ENCODE measurements at regions of chr14 and their contacts with region 1.

Region 1: DNA sequence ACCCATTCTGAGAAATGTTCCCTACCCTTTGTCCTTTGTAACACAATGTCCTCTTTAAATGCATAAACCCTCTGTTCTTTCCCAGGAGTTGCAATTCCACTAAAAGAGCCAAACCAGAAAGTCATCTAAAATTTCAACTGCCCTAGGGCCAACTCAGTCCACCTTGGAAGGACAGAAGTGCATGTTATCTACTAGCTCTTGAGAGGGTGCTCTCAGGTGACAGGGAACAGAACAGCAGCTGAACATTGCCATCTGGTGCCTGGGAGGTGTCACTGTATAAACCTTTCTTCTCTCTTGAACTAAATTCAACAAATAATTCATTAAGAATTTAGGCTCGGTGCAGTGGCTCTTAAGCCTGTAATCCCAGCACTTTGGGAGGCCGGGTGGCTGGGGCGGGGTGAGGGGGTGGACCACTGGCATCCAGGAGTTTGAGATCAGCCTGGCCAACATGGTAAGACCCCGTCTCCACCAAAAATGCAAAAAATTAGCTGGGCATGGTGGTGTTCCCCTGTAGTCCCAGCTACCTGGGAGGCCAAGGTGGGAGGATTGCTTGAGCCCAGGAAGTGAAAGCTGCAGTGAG is 10.3 kb upstream of the FERMT2 start:
- DNase-seq: peak; percentile 74
- H3K4me3 ChIP-seq: no peak overlapping the region
- H3K27ac ChIP-seq: no peak overlapping the region
- H3K4me1 ChIP-seq: peaks cover 10% of the 10 kb centered on the region
- H3K27me3 ChIP-seq: peaks cover 0 to 2% of the 10 kb centered on the region in 2 experiments
- CTCF ChIP-seq: peak; percentile 66 to 67
- POLR2A ChIP-seq: no peak

Region 2: DNA sequence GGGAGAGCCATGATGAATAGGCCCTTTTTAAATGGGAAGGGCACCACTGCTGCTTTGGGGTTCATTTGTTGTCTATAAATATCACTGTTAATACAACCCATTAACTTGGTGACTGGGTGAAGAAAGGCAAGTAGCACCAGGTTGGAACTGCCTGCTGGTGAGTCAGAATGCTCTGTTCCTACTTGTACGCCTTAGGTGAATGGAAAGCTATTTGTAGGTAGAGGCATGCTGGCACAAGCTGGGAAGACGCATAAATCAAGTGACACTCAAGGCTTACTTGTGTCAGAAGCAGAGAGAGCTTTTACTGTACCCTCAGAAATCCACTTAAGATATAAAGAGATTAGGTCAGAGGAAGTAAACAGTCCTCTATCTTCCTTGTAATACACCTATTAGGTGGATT is 1578.6 kb before region 1 on chr14:
- CTCF ChIA-PET with region 1: no interaction called
- POLR2A ChIA-PET with region 1: no interaction called
- dilution Hi-C with region 1: no loop called
- intact Hi-C with region 1: no loop called
- DNase-seq: no peak
- H3K4me3 ChIP-seq: no peak overlapping the region
- H3K27ac ChIP-seq: no peak overlapping the region
- H3K4me1 ChIP-seq: peaks cover 11% of the 10 kb centered on the region
- H3K27me3 ChIP-seq: no peaks in the 10 kb centered on the region
- CTCF ChIP-seq: no peak
- POLR2A ChIP-seq: no peak

Region 3: GRCh38 chr14:52299692-52300278 is 661.4 kb before region 1 on chr14:
- CTCF ChIA-PET with region 1: interaction called, 5 read pairs
- POLR2A ChIA-PET with region 1: no interaction called
- dilution Hi-C with region 1: no loop called
- intact Hi-C with region 1: loop called (anchors 2 kb)
- DNase-seq: peak; percentile 47
- H3K4me3 ChIP-seq: no peak overlapping the region
- H3K27ac ChIP-seq: no peak overlapping the region
- H3K4me1 ChIP-seq: no peaks in the 10 kb centered on the region
- H3K27me3 ChIP-seq: peaks cover 8 to 17% of the 10 kb centered on the region in 2 experiments
- CTCF ChIP-seq: peak; percentile 33 to 35
- POLR2A ChIP-seq: no peak

Region 4: DNA sequence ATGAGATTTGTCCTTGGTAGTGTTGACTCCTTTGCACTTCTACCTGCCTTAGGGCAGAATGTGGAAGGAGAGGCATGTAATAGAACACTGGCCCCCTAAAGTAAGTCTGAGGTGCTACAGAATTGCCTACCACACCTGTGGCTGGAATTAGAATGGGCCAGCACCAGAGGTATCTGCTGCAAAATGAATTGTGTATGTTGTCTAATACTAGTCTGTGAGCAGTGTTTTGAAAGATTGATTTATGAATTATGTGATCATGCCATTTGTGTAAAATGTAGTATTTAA is 236.8 kb before region 1 on chr14:
- CTCF ChIA-PET with region 1: interaction called, 11 read pairs
- POLR2A ChIA-PET with region 1: no interaction called
- dilution Hi-C with region 1: no loop called
- intact Hi-C with region 1: no loop called
- DNase-seq: no peak
- H3K4me3 ChIP-seq: no peak overlapping the region
- H3K27ac ChIP-seq: no peak overlapping the region
- H3K4me1 ChIP-seq: no peaks in the 10 kb centered on the region
- H3K27me3 ChIP-seq: no peaks in the 10 kb centered on the region
- CTCF ChIP-seq: no peak
- POLR2A ChIP-seq: no peak

Region 5: GRCh38 chr14:52829527-52829926 is 131.6 kb before region 1 on chr14:
- CTCF ChIA-PET with region 1: interaction called, 173 read pairs
- POLR2A ChIA-PET with region 1: interaction called, 4 read pairs
- dilution Hi-C with region 1: no loop called
- intact Hi-C with region 1: no loop called
- DNase-seq: no peak
- H3K4me3 ChIP-seq: no peak overlapping the region
- H3K27ac ChIP-seq: no peak overlapping the region
- H3K4me1 ChIP-seq: peaks cover 7% of the 10 kb centered on the region
- H3K27me3 ChIP-seq: no peaks in the 10 kb centered on the region
- CTCF ChIP-seq: no peak
- POLR2A ChIP-seq: no peak

Region 6: DNA sequence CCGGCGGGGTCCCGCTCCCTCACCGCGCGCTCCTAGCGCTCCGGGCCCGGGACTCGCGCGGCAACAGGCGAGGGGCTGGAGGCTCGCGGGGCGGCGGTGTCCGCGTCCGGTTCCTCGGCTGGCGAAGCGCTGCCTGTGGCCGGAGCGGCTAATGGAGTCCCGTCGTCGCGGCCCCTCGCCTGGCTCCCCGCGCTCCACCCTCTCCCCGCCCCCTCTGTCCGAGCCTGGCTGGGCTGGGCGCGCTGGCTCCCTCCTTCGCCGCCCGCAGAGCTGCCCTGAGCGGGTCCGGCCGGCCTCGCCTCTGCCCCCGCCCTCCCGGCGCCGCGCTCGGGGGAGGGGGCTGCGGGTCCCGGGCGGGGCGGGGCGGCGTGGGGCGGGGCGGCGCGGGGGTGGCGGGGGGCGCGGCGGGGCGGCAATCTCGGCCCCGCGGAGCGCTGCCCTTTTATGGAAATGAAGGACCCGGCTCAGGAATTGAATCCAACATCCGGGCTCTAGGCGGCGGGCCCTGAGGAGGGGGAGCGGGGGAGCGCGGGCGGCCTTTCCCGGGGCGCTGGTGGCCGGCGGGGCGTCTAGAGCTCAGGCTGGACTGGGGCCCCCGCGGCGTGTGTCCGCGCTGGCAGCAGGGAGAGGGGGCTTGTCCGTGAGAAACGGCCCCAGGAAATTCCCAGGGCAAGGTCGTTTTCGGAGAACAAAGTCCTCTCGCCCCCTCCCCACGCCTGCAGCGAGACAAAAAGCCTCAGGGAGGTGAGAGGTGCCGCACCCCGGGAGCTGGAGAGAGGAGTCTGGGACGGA is 10.1 kb before region 1 on chr14 and contains the start of gene FERMT2:
- CTCF ChIA-PET with region 1: interaction called, 13 read pairs
- POLR2A ChIA-PET with region 1: no interaction called
- dilution Hi-C with region 1: no loop called
- intact Hi-C with region 1: no loop called
- DNase-seq: peak; percentile 87
- H3K4me3 ChIP-seq: peak within 1 kb of the TSS; percentile 74 to 96 (median 85)
- H3K27ac ChIP-seq: peak within 1 kb of the TSS; percentile 85
- H3K4me1 ChIP-seq: peaks cover 24% of the 10 kb centered on the region
- H3K27me3 ChIP-seq: no peaks in the 10 kb centered on the region
- CTCF ChIP-seq: no peak
- POLR2A ChIP-seq: peak; percentile 50
- total RNA-seq, gene FERMT2: 108 and 113 TPM in 2 replicates

Region 7: DNA sequence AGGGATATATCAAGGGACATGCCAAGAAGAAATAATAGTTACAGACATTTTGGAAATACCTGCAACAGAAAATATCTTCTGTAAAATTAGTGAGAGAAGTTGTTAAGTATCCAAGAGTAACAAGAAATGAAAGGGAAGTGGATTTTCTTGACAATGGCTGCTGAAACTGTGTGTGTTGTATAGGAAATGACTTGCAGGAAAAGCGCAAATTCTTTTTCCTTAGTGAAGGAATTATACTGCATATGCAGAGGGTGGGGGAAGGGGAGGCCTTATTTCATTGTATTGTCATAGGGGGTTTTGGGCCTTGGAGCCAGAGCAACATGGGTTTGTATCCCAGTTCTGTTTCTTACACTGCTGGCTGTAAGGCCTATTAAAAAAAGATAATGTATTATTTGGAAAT is 276.3 kb after region 1 on chr14:
- CTCF ChIA-PET with region 1: no interaction called
- POLR2A ChIA-PET with region 1: no interaction called
- dilution Hi-C with region 1: no loop called
- intact Hi-C with region 1: loop called (anchors 1 kb)
- DNase-seq: peak; percentile 78
- H3K4me3 ChIP-seq: no peak overlapping the region
- H3K27ac ChIP-seq: peak overlapping the region; percentile 63
- H3K4me1 ChIP-seq: peaks cover 15% of the 10 kb centered on the region
- H3K27me3 ChIP-seq: no peaks in the 10 kb centered on the region
- CTCF ChIP-seq: no peak
- POLR2A ChIP-seq: no peak